Activated CD4-positive, alpha-beta memory T cell treated with anti-CD3 and anti-CD28 coated beads for 36 hours (primary cell): ENCODE measurements at regions of chr15 and their contacts with region 1.

Region 1: GRCh38 chr15:56040081-56041035 is 46.9 kb upstream of the NEDD4 start:
- DNase-seq: peak; percentile 44
- H3K4me3 Mint-ChIP-seq: no peak overlapping the region
- H3K27ac Mint-ChIP-seq: peak overlapping the region; percentile 64
- H3K4me1 Mint-ChIP-seq: peaks cover 55% of the 10 kb centered on the region
- H3K27me3 Mint-ChIP-seq: no peaks in the 10 kb centered on the region

Region 2: DNA sequence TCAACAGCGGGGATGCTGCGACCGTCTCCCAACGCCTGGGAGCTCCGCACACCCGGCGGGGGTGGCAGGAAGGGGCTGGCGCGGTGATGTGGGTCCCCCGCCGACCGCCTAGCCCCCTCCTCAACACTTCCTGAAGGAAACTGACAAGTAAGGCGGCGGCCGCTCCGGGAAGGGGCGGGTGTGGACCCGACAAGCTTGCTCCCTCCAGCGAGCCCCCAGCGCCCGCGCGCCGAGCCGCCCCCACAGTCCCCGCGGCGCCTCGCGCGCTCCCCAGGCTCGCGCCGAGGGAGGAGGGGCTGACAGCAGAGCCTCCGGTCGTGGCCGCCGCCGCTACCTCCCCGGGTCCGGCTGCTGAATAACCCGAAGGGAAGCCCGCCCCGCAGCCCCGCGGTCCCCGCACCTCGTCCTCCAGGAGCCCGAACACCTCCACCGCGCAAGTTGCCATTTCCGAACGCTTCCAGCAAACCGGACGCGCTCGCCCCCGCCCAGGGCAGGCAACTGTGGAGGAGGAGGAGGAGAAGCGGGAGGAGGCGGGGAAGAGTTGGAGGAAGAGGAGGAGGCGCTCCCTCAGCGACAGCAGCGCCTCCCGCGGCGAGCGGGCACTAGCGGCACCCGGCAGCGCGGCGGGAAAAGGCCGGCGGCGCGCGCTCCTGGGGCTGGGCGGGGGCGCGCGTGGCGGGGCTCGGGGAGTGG is 47.1 kb before region 1 on chr15 and contains the start of gene NEDD4:
- CTCF ChIA-PET with region 1: interaction called, 3 read pairs
- POLR2A ChIA-PET with region 1: no interaction called
- intact Hi-C with region 1: loop called (anchors 2 kb)
- DNase-seq: peak; percentile 81
- H3K4me3 Mint-ChIP-seq: peak within 1 kb of the TSS; percentile 81
- H3K27ac Mint-ChIP-seq: peak within 1 kb of the TSS; percentile 61
- H3K4me1 Mint-ChIP-seq: peaks cover 23% of the 10 kb centered on the region
- H3K27me3 Mint-ChIP-seq: peaks cover 11% of the 10 kb centered on the region
- total RNA-seq, gene NEDD4: 18.5 to 18.7 TPM

Region 3: GRCh38 chr15:56371495-56372147 is 331.3 kb after region 1 on chr15:
- CTCF ChIA-PET with region 1: no interaction called
- POLR2A ChIA-PET with region 1: no interaction called
- intact Hi-C with region 1: loop called (anchors 5 kb)
- DNase-seq: no peak
- H3K4me3 Mint-ChIP-seq: no peak overlapping the region
- H3K27ac Mint-ChIP-seq: no peak overlapping the region
- H3K4me1 Mint-ChIP-seq: peaks cover 7% of the 10 kb centered on the region
- H3K27me3 Mint-ChIP-seq: peaks cover 23% of the 10 kb centered on the region